ENCODE measurements at regions of chr21 and their contacts with region 1.

Region 1: GRCh38 chr21:45995686-45996179 is 14.2 kb downstream of the COL6A1 start:
- DNase-seq: peak in 1 of 2 donors; percentile 19
- H3K4me3 ChIP-seq: no peak overlapping the region
- H3K27ac ChIP-seq: peak overlapping the region in 3 of 5 donors; percentile 26 to 62 (median 57)
- H3K4me1 ChIP-seq: peaks cover 0 to 18% (median 6%) of the 10 kb centered on the region in 4 donors
- H3K27me3 ChIP-seq: no peaks in the 10 kb centered on the region
- CTCF ChIP-seq: no peak
- EP300 ChIP-seq: no peak
- POLR2A ChIP-seq: no peak

Region 2: GRCh38 chr21:46056450-46056903 is 60.7 kb after region 1 on chr21:
- intact Hi-C with region 1: loop called (anchors 10 kb)
- DNase-seq: peak; percentile 44 to 90
- H3K4me3 ChIP-seq: no peak overlapping the region
- H3K27ac ChIP-seq: peak overlapping the region; percentile 76 to 95 (median 88)
- H3K4me1 ChIP-seq: peaks cover 11 to 42% (median 29%) of the 10 kb centered on the region in 4 donors
- H3K27me3 ChIP-seq: peaks cover 0 to 36% (median 7%) of the 10 kb centered on the region in 3 donors
- CTCF ChIP-seq: no peak
- EP300 ChIP-seq: peak; percentile 87
- POLR2A ChIP-seq: no peak

Region 3: GRCh38 chr21:46122237-46122671 is 126.5 kb after region 1 on chr21:
- intact Hi-C with region 1: loop called (anchors 10 kb)
- DNase-seq: peak in 1 of 2 donors; percentile 24
- H3K4me3 ChIP-seq: no peak overlapping the region
- H3K27ac ChIP-seq: peak overlapping the region in 3 of 5 donors; percentile 4 to 29 (median 7)
- H3K4me1 ChIP-seq: no peaks in the 10 kb centered on the region
- H3K27me3 ChIP-seq: no peaks in the 10 kb centered on the region
- CTCF ChIP-seq: no peak
- EP300 ChIP-seq: no peak
- POLR2A ChIP-seq: no peak

Region 4: GRCh38 chr21:46243960-46244361 is 248.2 kb after region 1 on chr21:
- intact Hi-C with region 1: no loop called
- DNase-seq: no peak
- H3K4me3 ChIP-seq: no peak overlapping the region
- H3K27ac ChIP-seq: no peak overlapping the region
- H3K4me1 ChIP-seq: no peaks in the 10 kb centered on the region
- H3K27me3 ChIP-seq: no peaks in the 10 kb centered on the region
- CTCF ChIP-seq: no peak
- EP300 ChIP-seq: no peak
- POLR2A ChIP-seq: no peak

Region 5: GRCh38 chr21:46500224-46500856 is 504.6 kb after region 1 on chr21:
- intact Hi-C with region 1: no loop called
- DNase-seq: peak in 1 of 2 donors; percentile 43
- H3K4me3 ChIP-seq: no peak overlapping the region
- H3K27ac ChIP-seq: peak overlapping the region in 3 of 5 donors; percentile 4 to 52 (median 13)
- H3K4me1 ChIP-seq: peaks cover 7 to 24% (median 12%) of the 10 kb centered on the region in 4 donors
- H3K27me3 ChIP-seq: no peaks in the 10 kb centered on the region
- CTCF ChIP-seq: no peak
- EP300 ChIP-seq: no peak
- POLR2A ChIP-seq: no peak